H1 (cell line): ENCODE measurements at regions of chr7 and their contacts with region 1.

Region 1: GRCh38 chr7:73667344-73668102 is at the start of gene VPS37D:
- DNase-seq: peak; percentile 70 to 99
- H3K4me3 ChIP-seq: peak within 1 kb of the TSS; percentile 37 to 63 (median 46)
- H3K27ac ChIP-seq: no peak within 1 kb of the TSS
- H3K4me1 ChIP-seq: peaks cover 0 to 20% (median 9%) of the 10 kb centered on the region in 4 experiments; a peak in 6 of 7 replicates
- H3K27me3 ChIP-seq: no peaks in the 10 kb centered on the region; a peak in 1 of 7 replicates
- CTCF ChIP-seq: peak; percentile 73 to 93 (median 79)
- EP300 ChIP-seq: peak in 1 of 2 experiments; percentile 85; a peak in 2 of 3 replicates
- POLR2A ChIP-seq: no peak
- RAD21 ChIP-seq: peak; percentile 56 to 81
- total RNA-seq, gene VPS37D: 3.4 and 3.8 TPM in 2 replicates

Region 2: GRCh38 chr7:73612598-73613269 is 54.8 kb before region 1 on chr7:
- CTCF ChIA-PET with region 1: interaction called, 72 read pairs
- POLR2A ChIA-PET with region 1: interaction called, 3 read pairs
- DNase-seq: no peak
- H3K4me3 ChIP-seq: no peak overlapping the region
- H3K27ac ChIP-seq: no peak overlapping the region
- H3K4me1 ChIP-seq: peaks cover 0 to 3% (median 0%) of the 10 kb centered on the region in 4 experiments; a peak in 1 of 7 replicates
- H3K27me3 ChIP-seq: no peaks in the 10 kb centered on the region; a peak in 1 of 7 replicates
- CTCF ChIP-seq: peak in 2 of 3 experiments; percentile 17 to 41; a peak in 2 of 4 replicates
- EP300 ChIP-seq: no peak
- POLR2A ChIP-seq: no peak
- RAD21 ChIP-seq: peak; percentile 49 to 60

Region 3: DNA sequence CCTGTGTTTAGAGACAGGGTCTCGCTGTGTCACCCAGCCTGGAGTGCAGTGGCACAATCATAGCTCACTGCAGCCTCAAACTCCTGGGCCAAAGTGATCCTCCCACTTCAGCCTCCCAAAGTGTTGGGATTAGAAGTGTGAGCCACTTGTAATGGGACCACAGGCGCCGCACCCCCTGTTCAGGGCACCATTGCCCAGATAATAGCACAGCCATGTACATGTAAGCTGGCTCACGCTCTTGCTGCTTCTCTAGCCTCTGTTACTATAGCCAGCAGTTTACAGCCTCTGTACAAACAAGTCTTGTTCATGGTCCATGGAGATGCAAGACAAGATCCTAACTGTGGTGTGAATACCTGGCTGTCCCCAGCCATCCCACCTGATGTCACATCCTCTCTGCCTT is 39.0 kb before region 1 on chr7:
- CTCF ChIA-PET with region 1: interaction called, 11 read pairs
- POLR2A ChIA-PET with region 1: interaction called, 5 read pairs
- DNase-seq: no peak
- H3K4me3 ChIP-seq: no peak overlapping the region
- H3K27ac ChIP-seq: no peak overlapping the region
- H3K4me1 ChIP-seq: peaks cover 0 to 4% (median 1%) of the 10 kb centered on the region in 4 experiments; a peak in 4 of 7 replicates
- H3K27me3 ChIP-seq: peaks cover 0 to 7% (median 7%) of the 10 kb centered on the region in 4 experiments; a peak in 5 of 7 replicates
- CTCF ChIP-seq: no peak
- EP300 ChIP-seq: no peak
- POLR2A ChIP-seq: no peak
- RAD21 ChIP-seq: no peak

Region 4: GRCh38 chr7:73828107-73828803 is 160.7 kb after region 1 on chr7:
- CTCF ChIA-PET with region 1: no interaction called
- POLR2A ChIA-PET with region 1: no interaction called
- DNase-seq: no peak
- H3K4me3 ChIP-seq: no peak overlapping the region
- H3K27ac ChIP-seq: no peak overlapping the region; the same call in 1 of the 2 replicates
- H3K4me1 ChIP-seq: peaks cover 22 to 52% (median 39%) of the 10 kb centered on the region in 4 experiments
- H3K27me3 ChIP-seq: peaks cover 0 to 4% (median 0%) of the 10 kb centered on the region in 4 experiments; a peak in 2 of 7 replicates
- CTCF ChIP-seq: no peak
- EP300 ChIP-seq: no peak
- POLR2A ChIP-seq: 0 out of 3 replicates have a peak, but pooled peaks of 1 of the 2 experiments have one; percentile 28
- RAD21 ChIP-seq: no peak